OCI-LY7 (cell line): ENCODE measurements at regions of chr9 and their contacts with region 1.

Region 1: DNA sequence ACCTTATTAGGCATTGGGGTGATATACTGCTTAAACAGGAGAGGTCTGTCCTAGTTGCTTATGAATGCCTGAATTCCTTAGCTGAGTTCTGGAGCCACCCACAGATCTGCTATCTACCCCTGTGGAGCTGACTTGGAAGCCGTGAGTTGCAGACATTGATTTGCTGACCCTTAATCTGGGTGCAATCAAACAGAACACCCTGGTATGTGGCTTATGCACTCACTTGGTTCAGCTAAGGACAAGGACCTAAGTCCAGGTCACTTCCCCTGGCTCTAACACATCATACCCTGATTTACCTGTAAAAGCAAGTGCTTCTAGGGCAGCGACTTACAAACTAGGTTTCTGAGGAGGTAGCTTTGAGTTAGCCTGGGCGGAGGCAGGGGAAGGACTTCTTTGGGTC is 41.6 kb upstream of the TLR4 start:
- DNase-seq: no peak
- H3K4me3 ChIP-seq: no peak overlapping the region
- H3K27ac ChIP-seq: no peak overlapping the region
- H3K4me1 ChIP-seq: no peaks in the 10 kb centered on the region
- CTCF ChIP-seq: no peak

Region 2: DNA sequence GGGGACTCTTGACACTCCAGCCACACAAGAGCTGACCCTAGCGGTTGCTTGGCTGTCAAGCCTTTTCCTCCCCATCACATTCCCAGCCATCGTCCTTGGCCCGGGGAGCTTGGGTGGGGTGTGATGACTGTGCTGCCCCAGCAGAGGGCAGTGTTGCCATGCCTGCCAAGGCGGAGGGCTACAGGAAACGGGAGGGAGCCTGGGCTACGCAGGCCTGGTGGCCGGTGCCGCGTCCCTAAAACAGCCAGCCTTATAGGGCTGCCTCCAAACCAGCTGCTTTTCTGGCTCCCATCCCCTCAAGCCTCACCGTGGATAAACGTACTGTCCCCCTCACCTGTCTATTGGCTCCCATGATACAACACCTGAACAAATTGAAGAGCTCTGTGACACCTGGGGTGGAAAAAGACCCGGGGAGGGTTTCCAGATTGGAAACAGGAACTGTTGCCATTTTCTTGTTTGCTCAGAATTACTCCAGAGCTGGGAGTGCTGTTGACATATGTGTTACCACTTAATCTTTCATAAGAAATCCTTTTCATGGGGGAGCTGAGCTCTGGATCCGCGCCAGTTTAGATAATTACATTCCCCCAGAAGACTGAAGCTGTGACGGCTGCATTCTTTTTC is 175.0 kb before region 1 on chr9:
- CTCF ChIA-PET with region 1: no interaction called
- POLR2A ChIA-PET with region 1: no interaction called
- intact Hi-C with region 1: no loop called
- DNase-seq: peak; percentile 44
- H3K4me3 ChIP-seq: no peak overlapping the region
- H3K27ac ChIP-seq: no peak overlapping the region
- H3K4me1 ChIP-seq: no peaks in the 10 kb centered on the region
- CTCF ChIP-seq: peak; percentile 92

Region 3: DNA sequence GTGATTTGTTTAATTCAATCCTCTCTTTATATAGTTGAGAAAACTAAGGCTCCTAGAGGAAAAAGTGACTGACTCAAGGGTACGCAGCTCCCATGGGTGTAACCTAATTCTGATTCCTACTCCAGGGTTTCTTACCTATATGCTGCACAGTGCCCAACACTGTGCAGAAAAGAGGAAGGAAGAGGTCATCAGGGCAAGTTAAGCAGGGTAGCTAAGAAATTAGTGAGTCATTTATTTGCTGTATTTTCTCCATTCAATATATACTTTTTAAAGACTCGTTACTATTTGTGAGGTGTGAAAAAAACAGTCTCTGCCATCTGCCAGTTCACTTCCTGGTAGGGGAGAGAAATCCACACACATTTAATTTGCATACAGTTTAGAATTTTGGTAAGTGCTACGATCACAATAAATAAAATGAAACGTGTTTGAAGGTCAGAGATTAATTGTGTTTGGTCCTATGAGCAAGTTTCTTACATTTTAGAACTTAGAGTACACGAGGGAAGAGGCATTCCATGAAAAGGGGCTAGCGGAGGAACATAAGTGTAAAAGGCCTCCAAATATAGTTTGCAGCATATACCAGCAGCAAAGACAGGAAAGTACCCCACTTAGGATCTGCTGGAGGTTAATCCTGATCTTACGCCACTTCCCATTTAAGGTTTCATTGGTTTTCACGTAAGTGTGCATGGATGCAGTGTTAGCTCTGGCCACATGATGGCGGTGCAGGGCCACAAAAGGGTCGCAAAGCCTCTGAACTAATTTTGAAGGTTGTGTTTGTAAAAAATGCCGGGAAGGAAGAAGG is 18.3 kb before region 1 on chr9:
- CTCF ChIA-PET with region 1: no interaction called
- POLR2A ChIA-PET with region 1: no interaction called
- intact Hi-C with region 1: no loop called
- DNase-seq: peak; percentile 74
- H3K4me3 ChIP-seq: peak overlapping the region; percentile 32
- H3K27ac ChIP-seq: no peak overlapping the region
- H3K4me1 ChIP-seq: peaks cover 12% of the 10 kb centered on the region
- CTCF ChIP-seq: peak; percentile 99

Region 4: DNA sequence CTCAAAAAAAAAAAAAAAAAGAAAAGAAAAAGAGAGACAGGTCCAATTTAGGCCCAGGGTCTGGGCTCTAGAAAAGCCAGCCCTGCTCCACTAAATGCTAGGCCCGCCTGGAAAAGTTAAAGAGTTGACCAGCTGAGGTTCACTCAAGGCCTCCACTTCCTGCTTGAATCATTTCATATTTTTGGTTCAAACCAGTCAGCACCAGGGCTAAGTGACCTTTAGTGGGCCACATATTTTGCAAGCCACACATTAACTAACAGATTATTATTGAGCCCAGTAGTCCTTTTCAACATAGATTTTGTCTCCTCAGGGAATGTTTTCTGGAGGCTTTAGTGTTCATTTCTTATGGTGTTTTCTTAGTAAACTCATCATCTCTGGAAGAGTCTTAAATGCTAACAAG is 198.2 kb after region 1 on chr9:
- CTCF ChIA-PET with region 1: no interaction called
- POLR2A ChIA-PET with region 1: no interaction called
- intact Hi-C with region 1: loop called (anchors 5 kb)
- DNase-seq: no peak
- H3K4me3 ChIP-seq: no peak overlapping the region
- H3K27ac ChIP-seq: no peak overlapping the region
- H3K4me1 ChIP-seq: no peaks in the 10 kb centered on the region
- CTCF ChIP-seq: no peak

Region 5: GRCh38 chr9:117907420-117907819 is 244.8 kb after region 1 on chr9:
- CTCF ChIA-PET with region 1: no interaction called
- POLR2A ChIA-PET with region 1: no interaction called
- intact Hi-C with region 1: no loop called
- DNase-seq: no peak
- H3K4me3 ChIP-seq: no peak overlapping the region
- H3K27ac ChIP-seq: no peak overlapping the region
- H3K4me1 ChIP-seq: no peaks in the 10 kb centered on the region
- CTCF ChIP-seq: no peak